ENCODE measurements at regions of chr1 and their contacts with region 1.

Region 1: GRCh38 chr1:109655601-109656519 is at the start of gene GSTM4:
- DNase-seq: peak; percentile 77 to 84
- H3K4me3 ChIP-seq: peak within 1 kb of the TSS; percentile 48
- H3K4me3 Mint-ChIP-seq: peak within 1 kb of the TSS; percentile 80
- H3K27ac Mint-ChIP-seq: peak within 1 kb of the TSS; percentile 76
- H3K4me1 ChIP-seq: no peaks in the 10 kb centered on the region
- H3K4me1 Mint-ChIP-seq: peaks cover 18% of the 10 kb centered on the region
- H3K27me3 ChIP-seq: no peaks in the 10 kb centered on the region
- H3K27me3 Mint-ChIP-seq: no peaks in the 10 kb centered on the region
- CTCF ChIP-seq: no peak
- total RNA-seq, gene GSTM4: 9.6 and 11.9 TPM in 2 replicates

Region 2: GRCh38 chr1:109509176-109510134 is 146.4 kb before region 1 on chr1 and contains the start of gene AMIGO1:
- CTCF ChIA-PET with region 1: no interaction called
- POLR2A ChIA-PET with region 1: interaction called, 10 read pairs
- intact Hi-C with region 1: no loop called
- DNase-seq: peak in 1 of 2 experiments; percentile 61
- H3K4me3 ChIP-seq: peak within 1 kb of the TSS; percentile 45
- H3K4me3 Mint-ChIP-seq: peak within 1 kb of the TSS; percentile 76
- H3K27ac Mint-ChIP-seq: peak within 1 kb of the TSS; percentile 30
- H3K4me1 ChIP-seq: no peaks in the 10 kb centered on the region
- H3K4me1 Mint-ChIP-seq: peaks cover 6% of the 10 kb centered on the region
- H3K27me3 ChIP-seq: no peaks in the 10 kb centered on the region
- H3K27me3 Mint-ChIP-seq: peaks cover 10% of the 10 kb centered on the region
- CTCF ChIP-seq: no peak
- total RNA-seq, gene AMIGO1: 1.1 and 1.5 TPM in 2 replicates